Activated naive CD4-positive, alpha-beta T cell treated with anti-CD3 and anti-CD28 coated beads, Interleukin-2, amount 10 ng/mL, durations not matched to agents 7 days and 5 days (primary cell): ENCODE measurements at regions of chr14 and their contacts with region 1.

Region 1: GRCh38 chr14:24310646-24311604 is at the start of gene LTB4R:
- DNase-seq: peak; percentile 77
- H3K4me3 Mint-ChIP-seq: peak within 1 kb of the TSS; percentile 81
- H3K27ac Mint-ChIP-seq: peak within 1 kb of the TSS; percentile 88
- H3K4me1 Mint-ChIP-seq: peaks cover 76% of the 10 kb centered on the region
- H3K27me3 Mint-ChIP-seq: no peaks in the 10 kb centered on the region

Region 2: GRCh38 chr14:24171422-24172260 is 139.3 kb before region 1 on chr14 and contains the start of gene REC8:
- CTCF ChIA-PET with region 1: no interaction called
- DNase-seq: peak; percentile 81
- H3K4me3 Mint-ChIP-seq: peak within 1 kb of the TSS; percentile 71
- H3K27ac Mint-ChIP-seq: peak within 1 kb of the TSS; percentile 85
- H3K4me1 Mint-ChIP-seq: peaks cover 49% of the 10 kb centered on the region
- H3K27me3 Mint-ChIP-seq: no peaks in the 10 kb centered on the region

Region 3: GRCh38 chr14:24215495-24216344 is 95.2 kb before region 1 on chr14 and contains the start of gene MDP1:
- CTCF ChIA-PET with region 1: interaction called, 12 read pairs
- DNase-seq: peak; percentile 93
- H3K4me3 Mint-ChIP-seq: peak within 1 kb of the TSS; percentile 94
- H3K27ac Mint-ChIP-seq: peak within 1 kb of the TSS; percentile 95
- H3K4me1 Mint-ChIP-seq: peaks cover 56% of the 10 kb centered on the region
- H3K27me3 Mint-ChIP-seq: peaks cover 6% of the 10 kb centered on the region

Region 4: DNA sequence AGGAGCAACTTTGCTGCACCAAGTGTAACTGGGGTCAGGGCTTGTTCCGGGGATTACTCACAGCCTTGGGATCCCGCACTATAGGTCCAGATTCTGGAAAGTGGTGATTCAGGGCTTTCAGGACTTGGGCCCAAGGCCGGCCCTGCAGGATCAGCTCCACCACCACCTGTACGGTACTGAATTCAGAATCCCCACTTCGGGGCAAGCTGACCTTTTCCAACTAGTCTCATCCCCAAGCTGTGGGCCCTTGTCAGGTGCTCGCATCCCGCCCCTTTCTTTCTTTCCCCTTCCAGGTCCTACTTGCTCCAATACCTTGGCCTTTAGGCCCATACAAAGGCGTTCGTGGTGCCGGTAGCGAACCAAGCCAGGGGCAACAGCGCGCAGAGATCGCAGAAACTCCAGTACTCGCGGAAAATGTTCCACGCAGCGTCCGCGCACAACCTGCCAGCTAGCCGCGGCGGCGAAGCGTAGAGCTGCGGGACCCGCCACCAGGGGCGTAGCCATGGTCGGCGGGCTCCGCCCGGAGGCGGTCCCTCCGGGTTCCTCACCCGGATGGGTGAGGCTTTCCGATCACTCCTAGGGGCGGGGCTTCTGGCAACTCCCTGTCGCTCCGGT is 69.0 kb before region 1 on chr14:
- CTCF ChIA-PET with region 1: interaction called, 79 read pairs
- DNase-seq: peak; percentile 96
- H3K4me3 Mint-ChIP-seq: peak overlapping the region; percentile 81
- H3K27ac Mint-ChIP-seq: peak overlapping the region; percentile 97
- H3K4me1 Mint-ChIP-seq: peaks cover 67% of the 10 kb centered on the region
- H3K27me3 Mint-ChIP-seq: no peaks in the 10 kb centered on the region

Region 5: DNA sequence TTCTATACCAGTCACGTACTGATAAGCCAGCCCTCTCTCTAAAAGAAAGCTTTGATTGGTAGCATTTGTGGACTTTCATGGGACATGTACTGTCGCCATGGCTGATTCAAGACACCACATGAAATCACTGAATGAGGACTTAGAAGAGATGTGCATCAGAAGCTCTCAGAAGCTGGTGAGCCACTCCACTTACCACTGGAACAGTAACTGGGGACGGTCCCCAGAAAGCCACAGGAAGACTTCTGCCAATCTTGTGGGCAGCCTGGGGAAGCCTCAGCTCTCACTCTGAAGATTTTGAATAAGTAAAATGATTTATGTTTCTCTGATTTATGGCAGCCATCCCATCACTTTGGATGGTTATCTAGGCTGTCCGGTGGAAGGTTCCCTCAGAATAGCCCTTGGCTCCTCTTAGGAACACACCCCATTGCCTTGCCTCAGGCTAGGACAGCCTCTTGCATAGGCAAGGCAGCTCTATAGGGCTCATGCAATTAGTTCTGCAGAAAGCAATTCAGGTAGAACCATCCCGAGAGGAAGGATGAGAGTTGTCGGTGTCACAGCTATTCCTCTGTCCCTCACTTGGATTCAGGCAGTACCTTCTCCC is 21.2 kb before region 1 on chr14:
- CTCF ChIA-PET with region 1: interaction called, 105 read pairs
- DNase-seq: peak; percentile 60
- H3K4me3 Mint-ChIP-seq: no peak overlapping the region
- H3K27ac Mint-ChIP-seq: no peak overlapping the region
- H3K4me1 Mint-ChIP-seq: peaks cover 21% of the 10 kb centered on the region
- H3K27me3 Mint-ChIP-seq: no peaks in the 10 kb centered on the region

Region 6: DNA sequence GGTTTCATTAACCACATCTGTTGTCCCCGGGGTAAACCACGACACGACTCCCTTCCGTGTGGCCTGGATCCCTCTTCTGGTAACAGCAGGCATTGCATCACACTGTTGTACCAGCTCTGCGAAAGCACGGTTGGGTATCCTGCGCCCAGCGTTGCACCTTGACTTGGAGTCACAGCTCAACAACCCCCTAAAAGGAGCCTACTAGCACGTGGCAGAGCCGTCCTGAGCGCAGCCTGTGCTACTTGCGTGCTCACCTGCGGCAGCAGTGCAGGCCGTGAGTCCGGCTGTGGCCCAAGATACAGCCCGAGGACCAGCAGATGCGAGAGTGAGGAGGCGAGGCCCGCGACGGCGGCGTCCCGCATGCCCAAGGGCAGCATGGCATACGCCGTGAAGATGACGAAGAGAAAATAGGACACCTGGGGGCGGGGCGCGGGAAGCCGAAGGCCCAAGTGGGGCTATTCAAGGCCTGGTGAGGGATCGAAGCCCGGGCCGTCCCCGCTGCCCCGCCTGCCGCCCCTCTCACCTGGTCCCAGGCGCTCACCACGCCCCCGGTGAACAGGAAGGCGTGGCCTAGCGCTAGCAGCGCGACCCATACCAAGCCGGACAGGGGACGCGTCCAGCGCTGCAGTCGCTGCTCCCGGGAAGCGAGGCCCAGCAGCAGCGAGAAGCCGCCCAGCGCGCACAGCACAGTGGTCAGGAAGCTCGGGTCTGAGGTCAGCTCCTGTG is 21.5 kb after region 1 on chr14:
- CTCF ChIA-PET with region 1: interaction called, 129 read pairs
- DNase-seq: peak; percentile 92
- H3K4me3 Mint-ChIP-seq: peak overlapping the region; percentile 66
- H3K27ac Mint-ChIP-seq: peak overlapping the region; percentile 46
- H3K4me1 Mint-ChIP-seq: peaks cover 63% of the 10 kb centered on the region
- H3K27me3 Mint-ChIP-seq: peaks cover 79% of the 10 kb centered on the region

Region 7: GRCh38 chr14:24366721-24367513 is 56.0 kb after region 1 on chr14:
- CTCF ChIA-PET with region 1: no interaction called
- DNase-seq: peak; percentile 27
- H3K4me3 Mint-ChIP-seq: peak overlapping the region; percentile 35
- H3K27ac Mint-ChIP-seq: no peak overlapping the region
- H3K4me1 Mint-ChIP-seq: peaks cover 30% of the 10 kb centered on the region
- H3K27me3 Mint-ChIP-seq: peaks cover 85% of the 10 kb centered on the region